ENCODE measurements at regions of chr4 and their contacts with region 1.

Region 1: GRCh38 chr4:89410687-89411086 is 103.1 kb upstream of the GPRIN3 start:
- DNase-seq: no peak
- H3K4me3 ChIP-seq: no peak overlapping the region
- CTCF ChIP-seq: no peak

Region 2: GRCh38 chr4:89356086-89356485 is 54.6 kb before region 1 on chr4:
- in situ Hi-C with region 1: loop called (anchors 5 kb)
- DNase-seq: no peak
- H3K4me3 ChIP-seq: no peak overlapping the region
- CTCF ChIP-seq: no peak

Measured in astrocyte of the cerebellum (primary cell).